ENCODE measurements at regions of chr11 and their contacts with region 1.

Region 1: GRCh38 chr11:120172054-120172911 is 34.4 kb upstream of the TRIM29 start:
- DNase-seq: peak; percentile 49 to 79
- H3K4me3 ChIP-seq: no peak overlapping the region
- H3K27ac ChIP-seq: no peak overlapping the region
- H3K4me1 ChIP-seq: peaks cover 0 to 15% (median 3%) of the 10 kb centered on the region in 4 experiments; a peak in 5 of 7 replicates
- H3K27me3 ChIP-seq: peaks cover 21 to 75% (median 47%) of the 10 kb centered on the region in 4 experiments
- CTCF ChIP-seq: peak; percentile 84 to 96 (median 88)
- EP300 ChIP-seq: no peak
- POLR2A ChIP-seq: no peak
- RAD21 ChIP-seq: peak; percentile 99

Region 2: DNA sequence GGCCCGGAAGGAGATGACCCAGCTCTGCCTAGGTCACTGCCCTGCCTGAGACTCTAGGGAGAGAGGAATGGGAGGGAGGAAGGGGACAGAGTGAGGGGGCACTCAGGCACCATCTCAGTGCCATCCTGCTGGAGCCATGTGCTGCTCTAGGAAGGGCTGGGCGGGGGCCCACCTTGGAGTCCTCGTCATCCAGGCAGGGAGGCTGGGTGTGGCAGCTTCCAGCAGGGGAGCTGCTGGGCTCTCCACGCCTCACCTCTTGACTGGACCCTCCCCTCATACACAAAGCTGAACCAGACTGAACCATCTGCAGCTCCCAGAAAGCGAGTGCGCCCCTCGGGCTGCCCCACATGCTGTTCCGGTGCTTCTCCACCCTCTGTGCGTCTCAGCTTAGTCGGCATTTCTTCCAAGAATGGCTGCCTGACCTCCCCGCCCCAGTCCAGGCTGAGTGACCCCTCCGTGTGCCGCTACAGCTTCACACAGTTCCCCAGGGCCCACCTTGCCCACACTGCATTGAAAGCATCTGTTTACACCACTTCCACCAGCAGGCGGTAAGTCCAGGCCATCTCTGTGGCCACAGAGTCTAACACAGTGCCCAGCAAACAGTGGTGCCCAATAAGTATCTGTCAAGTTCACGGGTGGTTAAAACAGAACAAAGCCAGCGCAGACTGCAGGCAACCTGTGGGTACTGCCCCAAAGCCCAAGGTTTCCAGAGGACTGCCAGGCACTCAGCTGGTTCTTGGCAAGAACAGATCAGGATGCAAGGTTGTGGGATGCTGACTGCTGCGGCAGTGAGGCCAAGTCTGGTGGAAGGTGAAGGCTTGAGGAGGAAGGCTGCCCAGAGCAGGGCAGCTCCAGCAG is 25.0 kb before region 1 on chr11:
- CTCF ChIA-PET with region 1: interaction called, 17 read pairs
- POLR2A ChIA-PET with region 1: interaction called, 6 read pairs
- DNase-seq: peak in 1 of 2 experiments; percentile 41
- H3K4me3 ChIP-seq: no peak overlapping the region
- H3K27ac ChIP-seq: no peak overlapping the region
- H3K4me1 ChIP-seq: peaks cover 0 to 2% (median 0%) of the 10 kb centered on the region in 4 experiments; a peak in 1 of 7 replicates
- H3K27me3 ChIP-seq: peaks cover 0 to 7% (median under 1%) of the 10 kb centered on the region in 4 experiments; a peak in 3 of 7 replicates
- CTCF ChIP-seq: peak in 1 of 3 experiments; percentile 6; a peak in 1 of 4 replicates
- EP300 ChIP-seq: no peak
- POLR2A ChIP-seq: no peak
- RAD21 ChIP-seq: no peak

Region 3: GRCh38 chr11:120197251-120197891 is 25.1 kb after region 1 on chr11:
- CTCF ChIA-PET with region 1: interaction called, 88 read pairs
- POLR2A ChIA-PET with region 1: no interaction called
- DNase-seq: no peak
- H3K4me3 ChIP-seq: peak overlapping the region in 1 of 4 experiments; percentile 29; a peak in 1 of 8 replicates
- H3K27ac ChIP-seq: no peak overlapping the region
- H3K4me1 ChIP-seq: peaks cover 4 to 28% (median 20%) of the 10 kb centered on the region in 4 experiments
- H3K27me3 ChIP-seq: peaks cover 3 to 41% (median 38%) of the 10 kb centered on the region in 4 experiments
- CTCF ChIP-seq: 0 out of 4 replicates have a peak, but pooled peaks of 1 of the 3 experiments have one; percentile 0
- EP300 ChIP-seq: no peak
- POLR2A ChIP-seq: no peak
- RAD21 ChIP-seq: no peak

Region 4: DNA sequence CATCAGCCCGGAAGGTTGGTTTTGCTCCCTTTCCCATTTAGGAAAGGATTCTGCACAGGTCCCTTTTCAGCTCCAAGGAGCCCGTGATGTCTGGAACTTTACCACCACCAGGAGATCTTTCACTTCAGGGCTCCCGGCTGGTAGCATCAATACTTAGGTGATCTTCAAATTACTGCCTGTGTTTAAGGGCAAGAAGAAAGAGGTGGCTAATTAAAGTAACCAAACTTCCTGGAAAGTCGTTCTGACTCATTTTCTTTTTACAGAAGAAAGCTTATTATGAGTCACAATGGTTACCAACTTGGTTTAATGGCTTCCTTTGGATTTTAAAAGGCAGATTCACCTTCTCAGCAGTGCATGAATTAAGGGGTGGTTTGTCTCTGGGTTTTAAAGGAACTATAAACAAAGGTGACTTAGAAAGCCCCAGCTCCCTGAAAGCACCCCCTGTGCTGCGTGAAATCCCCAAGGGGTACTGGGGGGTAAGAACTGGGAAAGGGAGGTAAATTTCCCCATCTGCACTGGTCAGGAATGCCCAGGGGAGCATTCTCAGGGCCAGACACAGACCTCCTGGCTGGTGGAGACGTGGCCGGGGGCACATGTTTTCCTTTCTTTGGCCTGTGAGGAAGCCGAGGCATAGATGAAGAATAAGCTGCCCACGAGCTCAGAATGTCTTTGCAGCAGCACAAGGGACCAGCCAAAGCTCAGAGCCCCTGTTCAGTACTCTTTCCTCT is 76.4 kb after region 1 on chr11:
- CTCF ChIA-PET with region 1: interaction called, 10 read pairs
- POLR2A ChIA-PET with region 1: no interaction called
- DNase-seq: no peak
- H3K4me3 ChIP-seq: no peak overlapping the region
- H3K27ac ChIP-seq: 0 out of 2 replicates have a peak overlapping the region, but pooled peaks have one; percentile 31
- H3K4me1 ChIP-seq: peaks cover 0 to 16% (median 5%) of the 10 kb centered on the region in 4 experiments
- H3K27me3 ChIP-seq: no peaks in the 10 kb centered on the region
- CTCF ChIP-seq: no peak
- EP300 ChIP-seq: peak in 1 of 2 experiments; percentile 17; a peak in 1 of 3 replicates
- POLR2A ChIP-seq: no peak
- RAD21 ChIP-seq: no peak